H1 (cell line): ENCODE measurements at regions of chr1 and their contacts with region 1.

Region 1: DNA sequence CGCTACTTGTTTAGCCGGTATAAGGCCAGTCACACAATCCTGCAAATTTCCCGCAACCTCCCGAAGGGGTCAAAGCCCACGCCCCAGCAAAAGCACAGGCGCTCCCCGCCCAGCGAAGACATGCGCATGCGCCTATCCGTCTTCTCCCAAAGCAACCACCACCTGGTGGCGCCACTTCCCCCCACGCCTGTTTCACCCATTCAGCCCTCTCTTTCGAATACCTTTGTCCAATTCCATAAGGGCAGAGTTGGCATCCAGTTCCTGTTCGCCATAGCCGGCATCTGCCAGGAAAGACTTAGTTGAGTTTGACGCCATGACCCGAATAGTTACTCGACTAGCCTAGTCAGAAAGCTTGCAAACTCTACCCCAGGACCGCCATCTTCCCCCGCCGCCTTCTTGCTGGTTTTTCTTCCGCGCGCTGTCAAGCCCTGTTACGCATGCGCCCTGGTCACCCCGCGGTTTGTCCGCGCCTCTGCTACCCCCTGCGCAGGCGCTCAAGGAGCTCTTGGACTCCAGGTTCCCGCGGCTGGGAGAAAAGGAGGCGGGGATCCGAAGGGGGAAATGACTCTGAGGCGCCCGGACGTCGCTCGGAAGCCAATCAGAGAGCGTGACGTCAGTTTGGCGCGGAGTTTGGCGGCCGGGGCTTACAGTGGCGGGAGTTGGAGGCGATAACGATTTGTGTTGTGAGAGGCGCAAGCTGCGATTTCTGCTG is at the starts of genes DTL and INTS7:
- DNase-seq: peak; percentile 98
- H3K4me3 ChIP-seq: peak within 1 kb of the TSS; percentile 62 to 99 (median 88)
- H3K27ac ChIP-seq: peak within 1 kb of the TSS; percentile 97
- H3K4me1 ChIP-seq: peaks cover 0 to 3% (median 0%) of the 10 kb centered on the region in 4 experiments; a peak in 1 of 7 replicates
- H3K27me3 ChIP-seq: no peaks in the 10 kb centered on the region
- CTCF ChIP-seq: peak; percentile 25 to 88 (median 81)
- EP300 ChIP-seq: 0 out of 3 replicates have a peak, but pooled peaks of 1 of the 2 experiments have one; percentile 20
- POLR2A ChIP-seq: peak; percentile 87 to 97
- RAD21 ChIP-seq: no peak
- total RNA-seq, gene DTL: 46.9 and 48.7 TPM in 2 replicates
- total RNA-seq, gene INTS7: 22.4 and 24.3 TPM in 2 replicates

Region 2: DNA sequence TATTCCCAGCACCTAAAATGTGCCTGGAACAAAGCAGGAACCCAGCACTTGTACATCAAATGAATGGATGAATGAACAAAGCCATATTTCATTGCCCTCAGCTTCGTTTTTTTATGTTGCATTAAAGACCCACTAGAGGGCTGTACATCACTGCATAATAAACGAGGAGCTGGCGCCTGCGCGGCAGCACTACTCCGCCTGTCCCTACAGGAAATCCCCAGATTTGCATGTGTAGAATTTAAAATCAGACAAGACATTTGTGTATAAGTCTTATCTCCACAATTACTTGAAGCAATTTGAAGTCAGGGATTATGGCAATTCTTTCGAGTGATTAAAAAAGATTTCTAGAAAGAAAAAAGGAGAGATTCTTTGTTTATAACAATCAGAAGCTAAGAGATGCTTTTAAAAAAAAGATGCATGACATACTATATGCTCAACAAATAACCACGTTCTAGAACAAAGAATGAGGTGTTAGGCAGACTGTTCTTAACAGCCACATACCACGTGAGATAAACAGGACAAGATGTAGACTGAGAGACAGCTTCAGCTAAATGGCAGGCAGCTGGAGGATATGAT is 354.4 kb before region 1 on chr1:
- CTCF ChIA-PET with region 1: interaction called, 65 read pairs
- POLR2A ChIA-PET with region 1: interaction called, 4 read pairs
- DNase-seq: no peak
- H3K4me3 ChIP-seq: no peak overlapping the region
- H3K27ac ChIP-seq: no peak overlapping the region
- H3K4me1 ChIP-seq: peaks cover 0 to 3% (median 0%) of the 10 kb centered on the region in 4 experiments; a peak in 1 of 7 replicates
- H3K27me3 ChIP-seq: no peaks in the 10 kb centered on the region
- CTCF ChIP-seq: peak; percentile 38 to 85 (median 55)
- EP300 ChIP-seq: no peak
- POLR2A ChIP-seq: no peak
- RAD21 ChIP-seq: peak; percentile 83 to 84

Region 3: GRCh38 chr1:212012034-212012740 is 23.1 kb before region 1 on chr1:
- CTCF ChIA-PET with region 1: interaction called, 33 read pairs
- POLR2A ChIA-PET with region 1: interaction called, 6 read pairs
- DNase-seq: peak; percentile 21 to 66
- H3K4me3 ChIP-seq: no peak overlapping the region
- H3K27ac ChIP-seq: no peak overlapping the region
- H3K4me1 ChIP-seq: no peaks in the 10 kb centered on the region
- H3K27me3 ChIP-seq: no peaks in the 10 kb centered on the region
- CTCF ChIP-seq: peak; percentile 84 to 98 (median 97)
- EP300 ChIP-seq: no peak
- POLR2A ChIP-seq: no peak
- RAD21 ChIP-seq: peak; percentile 84 to 86

Region 4: GRCh38 chr1:212024469-212025149 is 10.7 kb before region 1 on chr1:
- CTCF ChIA-PET with region 1: interaction called, 24 read pairs
- POLR2A ChIA-PET with region 1: interaction called, 7 read pairs
- DNase-seq: no peak
- H3K4me3 ChIP-seq: no peak overlapping the region
- H3K27ac ChIP-seq: no peak overlapping the region
- H3K4me1 ChIP-seq: peaks cover 0 to 2% (median 1%) of the 10 kb centered on the region in 4 experiments; a peak in 2 of 7 replicates
- H3K27me3 ChIP-seq: no peaks in the 10 kb centered on the region
- CTCF ChIP-seq: no peak
- EP300 ChIP-seq: no peak
- POLR2A ChIP-seq: no peak
- RAD21 ChIP-seq: no peak

Region 5: DNA sequence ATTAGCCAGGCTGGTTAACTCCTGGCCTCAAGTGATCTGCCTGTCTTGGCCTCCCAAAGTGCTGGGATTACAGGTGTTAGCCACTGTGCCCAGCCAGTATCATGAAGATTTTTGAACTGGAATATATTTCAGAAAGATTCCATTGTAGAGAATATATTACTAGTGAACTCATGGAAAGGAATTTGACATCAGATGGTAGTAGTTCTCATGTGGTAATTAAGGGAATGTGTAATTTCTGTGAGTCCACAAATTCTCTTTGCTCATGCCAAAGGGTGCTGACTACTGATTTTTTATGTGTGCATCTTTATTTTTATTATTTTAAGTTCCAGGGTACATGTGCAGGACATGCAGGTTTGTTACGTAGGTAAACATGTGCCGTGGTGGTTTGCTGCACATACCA is 10.7 kb after region 1 on chr1:
- CTCF ChIA-PET with region 1: interaction called, 14 read pairs
- POLR2A ChIA-PET with region 1: interaction called, 9 read pairs
- DNase-seq: no peak
- H3K4me3 ChIP-seq: no peak overlapping the region
- H3K27ac ChIP-seq: no peak overlapping the region
- H3K4me1 ChIP-seq: no peaks in the 10 kb centered on the region
- H3K27me3 ChIP-seq: no peaks in the 10 kb centered on the region
- CTCF ChIP-seq: no peak
- EP300 ChIP-seq: no peak
- POLR2A ChIP-seq: no peak
- RAD21 ChIP-seq: no peak

Region 6: DNA sequence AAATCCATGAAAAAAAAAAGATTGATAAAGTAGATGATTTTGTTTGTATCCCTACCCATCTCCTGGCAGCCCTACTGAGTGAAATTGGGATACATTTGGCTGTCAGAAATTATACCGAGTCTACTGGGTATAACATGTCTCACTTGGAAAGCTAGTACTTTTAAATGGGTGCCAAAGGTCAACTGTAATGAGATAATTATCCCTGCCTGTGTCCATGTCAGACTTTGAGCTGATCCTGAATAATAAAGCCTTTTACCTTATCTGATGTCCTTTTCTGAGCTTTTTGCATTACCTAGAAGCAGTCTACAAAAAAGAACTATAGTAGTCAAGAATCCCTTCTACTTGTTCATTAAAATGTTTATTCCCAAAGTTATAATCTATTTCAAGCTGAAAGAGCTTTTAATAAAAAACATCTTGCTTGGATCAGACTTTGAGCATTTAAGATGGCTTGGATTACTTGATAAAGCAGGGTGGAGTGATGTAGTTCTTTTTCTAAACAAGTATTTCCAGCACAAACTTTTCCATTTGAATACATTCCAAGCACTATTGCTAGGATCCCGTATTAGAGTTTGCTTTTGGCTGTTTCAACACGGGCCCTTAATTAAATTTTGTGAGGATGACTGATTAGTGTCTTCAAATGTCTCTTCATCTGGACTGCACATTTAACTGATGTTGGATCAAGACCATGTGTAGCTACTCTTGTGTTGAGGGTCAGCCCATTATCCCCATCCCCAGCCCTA is 69.5 kb after region 1 on chr1:
- CTCF ChIA-PET with region 1: interaction called, 10 read pairs
- POLR2A ChIA-PET with region 1: no interaction called
- DNase-seq: no peak
- H3K4me3 ChIP-seq: no peak overlapping the region
- H3K27ac ChIP-seq: peak overlapping the region; percentile 29; the same call in 1 of the 2 replicates
- H3K4me1 ChIP-seq: peaks cover 2 to 20% (median 13%) of the 10 kb centered on the region in 4 experiments; a peak in 5 of 7 replicates
- H3K27me3 ChIP-seq: no peaks in the 10 kb centered on the region
- CTCF ChIP-seq: no peak
- EP300 ChIP-seq: no peak
- POLR2A ChIP-seq: no peak
- RAD21 ChIP-seq: no peak